ENCODE measurements at regions of chr3 and their contacts with region 1.

Region 1: GRCh38 chr3:5426094-5426883 is 238.8 kb downstream of the EDEM1 start:
- DNase-seq: peak; percentile 44
- ATAC-seq: peak; percentile 70
- H3K4me3 Mint-ChIP-seq: no peak overlapping the region
- H3K27ac Mint-ChIP-seq: no peak overlapping the region
- H3K4me1 Mint-ChIP-seq: peaks cover 18% of the 10 kb centered on the region
- H3K27me3 Mint-ChIP-seq: peaks cover 5% of the 10 kb centered on the region
- CTCF ChIP-seq: no peak

Region 2: GRCh38 chr3:4935347-4935746 is 490.9 kb before region 1 on chr3:
- CTCF ChIA-PET with region 1: no interaction called
- POLR2A ChIA-PET with region 1: no interaction called
- intact Hi-C with region 1: loop called (anchors 10 kb)
- DNase-seq: no peak
- ATAC-seq: no peak
- H3K4me3 Mint-ChIP-seq: no peak overlapping the region
- H3K27ac Mint-ChIP-seq: no peak overlapping the region
- H3K4me1 Mint-ChIP-seq: peaks cover 14% of the 10 kb centered on the region
- H3K27me3 Mint-ChIP-seq: no peaks in the 10 kb centered on the region
- CTCF ChIP-seq: no peak

Region 3: GRCh38 chr3:5731094-5731493 is 304.8 kb after region 1 on chr3:
- CTCF ChIA-PET with region 1: no interaction called
- POLR2A ChIA-PET with region 1: no interaction called
- intact Hi-C with region 1: loop called (anchors 10 kb)
- DNase-seq: no peak
- ATAC-seq: no peak
- H3K4me3 Mint-ChIP-seq: no peak overlapping the region
- H3K27ac Mint-ChIP-seq: no peak overlapping the region
- H3K4me1 Mint-ChIP-seq: no peaks in the 10 kb centered on the region
- H3K27me3 Mint-ChIP-seq: no peaks in the 10 kb centered on the region
- CTCF ChIP-seq: no peak

Measured in activated B cell treated with CpG ODN at 0.5 μM for 24 hours (primary cell).